Activated CD4-positive, alpha-beta memory T cell treated with anti-CD3 and anti-CD28 coated beads for 36 hours (primary cell): ENCODE measurements at regions of chr21 and their contacts with region 1.

Region 1: GRCh38 chr21:41121785-41122421 is 46.1 kb upstream of the BACE2 start:
- DNase-seq: peak; percentile 73
- H3K4me3 Mint-ChIP-seq: no peak overlapping the region
- H3K27ac Mint-ChIP-seq: no peak overlapping the region
- H3K4me1 Mint-ChIP-seq: no peaks in the 10 kb centered on the region
- H3K27me3 Mint-ChIP-seq: peaks cover 8% of the 10 kb centered on the region

Region 2: DNA sequence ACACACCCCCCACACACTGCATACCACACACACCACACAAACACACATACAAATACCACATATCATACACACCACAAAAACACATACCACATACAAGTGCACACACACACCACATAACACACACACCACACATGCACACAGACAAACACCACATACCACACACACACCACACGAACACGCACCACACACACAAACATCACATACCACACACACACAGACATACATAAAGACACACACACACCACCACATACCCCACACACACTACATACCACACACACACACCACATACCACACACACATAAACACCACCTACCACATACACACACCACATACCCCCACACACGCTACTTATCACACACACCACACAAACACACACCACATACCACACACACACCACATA is 128.9 kb before region 1 on chr21:
- CTCF ChIA-PET with region 1: no interaction called
- POLR2A ChIA-PET with region 1: no interaction called
- intact Hi-C with region 1: no loop called
- DNase-seq: no peak
- H3K4me3 Mint-ChIP-seq: no peak overlapping the region
- H3K27ac Mint-ChIP-seq: no peak overlapping the region
- H3K4me1 Mint-ChIP-seq: no peaks in the 10 kb centered on the region
- H3K27me3 Mint-ChIP-seq: no peaks in the 10 kb centered on the region

Region 3: DNA sequence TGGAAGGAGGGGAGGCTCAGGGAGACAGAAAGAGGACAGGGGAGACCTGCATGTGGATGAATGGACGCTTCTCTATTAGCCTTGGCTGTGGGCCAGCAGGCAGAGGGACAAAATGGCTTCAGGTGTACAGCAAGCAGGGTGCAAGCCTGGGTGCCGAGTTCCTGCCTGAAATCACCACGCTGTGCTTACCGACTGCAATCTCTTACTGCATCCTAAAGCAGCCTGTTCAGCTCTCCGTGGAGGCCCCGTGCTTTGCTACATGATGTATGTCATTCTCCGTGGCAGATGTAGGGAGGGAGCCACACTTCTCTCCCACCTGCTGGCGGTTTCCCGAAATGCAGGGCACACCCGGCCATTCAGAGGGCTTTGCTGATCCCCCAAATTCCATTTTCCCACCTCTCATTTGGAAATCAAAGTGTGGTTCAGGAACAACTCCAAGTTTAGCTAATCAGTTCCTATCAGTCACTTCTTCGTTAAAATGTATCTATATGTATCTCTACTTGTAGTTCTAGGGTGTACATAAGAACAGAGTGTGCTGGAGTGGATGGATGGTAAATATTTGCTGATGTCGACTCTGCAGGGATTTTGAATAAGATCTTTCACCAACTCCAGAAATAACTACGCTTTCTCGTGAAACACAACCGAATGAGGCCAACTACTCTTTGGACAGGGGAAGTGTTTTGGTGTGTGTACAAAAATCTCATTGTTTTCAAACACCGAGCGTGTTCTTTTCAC is 76.2 kb before region 1 on chr21:
- CTCF ChIA-PET with region 1: no interaction called
- POLR2A ChIA-PET with region 1: no interaction called
- intact Hi-C with region 1: no loop called
- DNase-seq: no peak
- H3K4me3 Mint-ChIP-seq: no peak overlapping the region
- H3K27ac Mint-ChIP-seq: no peak overlapping the region
- H3K4me1 Mint-ChIP-seq: peaks cover 2% of the 10 kb centered on the region
- H3K27me3 Mint-ChIP-seq: peaks cover 7% of the 10 kb centered on the region

Region 4: GRCh38 chr21:41133896-41134522 is 12.1 kb after region 1 on chr21:
- CTCF ChIA-PET with region 1: interaction called, 18 read pairs
- POLR2A ChIA-PET with region 1: no interaction called
- intact Hi-C with region 1: no loop called
- DNase-seq: no peak
- H3K4me3 Mint-ChIP-seq: no peak overlapping the region
- H3K27ac Mint-ChIP-seq: no peak overlapping the region
- H3K4me1 Mint-ChIP-seq: no peaks in the 10 kb centered on the region
- H3K27me3 Mint-ChIP-seq: peaks cover 7% of the 10 kb centered on the region

Region 5: GRCh38 chr21:41164981-41165655 is 43.2 kb after region 1 on chr21:
- CTCF ChIA-PET with region 1: no interaction called
- POLR2A ChIA-PET with region 1: no interaction called
- intact Hi-C with region 1: loop called (anchors 1 kb)
- DNase-seq: no peak
- H3K4me3 Mint-ChIP-seq: no peak overlapping the region
- H3K27ac Mint-ChIP-seq: no peak overlapping the region
- H3K4me1 Mint-ChIP-seq: peaks cover 7% of the 10 kb centered on the region
- H3K27me3 Mint-ChIP-seq: peaks cover 41% of the 10 kb centered on the region